Gastrocnemius medialis (tissue), 4 donors: ENCODE measurements at regions of chr6 and their contacts with region 1.

Region 1: GRCh38 chr6:52233975-52234823 is 10.1 kb downstream of the IL17F start:
- DNase-seq: peak in 1 of 2 donors; percentile 24
- ATAC-seq: peak; percentile 56 to 88
- H3K4me3 ChIP-seq: no peak overlapping the region
- H3K27ac ChIP-seq: no peak overlapping the region
- H3K4me1 ChIP-seq: no peaks in the 10 kb centered on the region
- H3K27me3 ChIP-seq: no peaks in the 10 kb centered on the region
- CTCF ChIP-seq: peak; percentile 37 to 71 (median 67)
- POLR2A ChIP-seq: no peak

Region 2: GRCh38 chr6:52063584-52064344 is 170.4 kb before region 1 on chr6:
- in situ Hi-C with region 1: no loop called
- intact Hi-C with region 1: loop called (anchors 1 kb)
- DNase-seq: peak in 1 of 2 donors; percentile 25
- ATAC-seq: peak; percentile 74 to 84
- H3K4me3 ChIP-seq: peak overlapping the region in 2 of 4 donors; percentile 21 to 34
- H3K27ac ChIP-seq: no peak overlapping the region
- H3K4me1 ChIP-seq: peaks cover 0 to 3% of the 10 kb centered on the region in 2 donors
- H3K27me3 ChIP-seq: no peaks in the 10 kb centered on the region
- CTCF ChIP-seq: peak in 4 of 5 experiments; percentile 37 to 72 (median 44)
- POLR2A ChIP-seq: no peak

Region 3: DNA sequence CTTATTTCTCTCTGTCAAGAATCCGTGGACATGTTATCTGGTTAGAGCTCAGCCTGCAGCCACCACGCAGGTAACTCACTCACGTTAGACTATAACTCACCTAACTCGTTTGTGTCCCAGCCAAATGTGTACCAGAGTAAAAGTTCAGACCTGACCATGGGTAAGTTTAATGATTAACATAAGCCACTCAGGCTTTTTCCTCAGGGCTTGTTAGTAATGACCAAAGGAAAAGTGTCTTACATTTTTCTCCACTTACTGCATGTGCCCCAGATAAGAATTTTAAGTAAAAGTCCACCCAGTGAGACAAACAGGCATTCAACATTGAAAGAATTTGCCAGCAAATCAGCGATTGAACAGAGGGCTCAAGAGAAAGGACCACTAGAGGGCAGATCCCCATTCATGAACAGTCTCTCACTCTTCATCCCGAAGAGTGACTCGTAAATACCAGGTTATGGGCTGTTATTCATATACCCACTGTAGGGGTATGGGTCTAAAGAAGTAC is 146.7 kb before region 1 on chr6 and contains the start of gene PKHD1:
- in situ Hi-C with region 1: loop called in 3 of 4 experiments (anchors 10 kb)
- intact Hi-C with region 1: loop called (anchors 1 kb)
- DNase-seq: no peak
- ATAC-seq: peak in 1 of 2 donors; percentile 74
- H3K4me3 ChIP-seq: no peak within 1 kb of the TSS
- H3K27ac ChIP-seq: no peak within 1 kb of the TSS
- H3K4me1 ChIP-seq: no peaks in the 10 kb centered on the region
- H3K27me3 ChIP-seq: no peaks in the 10 kb centered on the region
- CTCF ChIP-seq: peak in 4 of 5 experiments; percentile 34 to 49 (median 42)
- POLR2A ChIP-seq: no peak
- total RNA-seq, gene PKHD1: 0.02 to 0.05 (median 0.02) TPM in 3 of 4 donors, not detected in the other

Region 4: GRCh38 chr6:52108128-52108527 is 126.1 kb before region 1 on chr6:
- in situ Hi-C with region 1: no loop called
- intact Hi-C with region 1: loop called (anchors 5 kb)
- DNase-seq: peak; percentile 83 to 87
- ATAC-seq: peak; percentile 75 to 77
- H3K4me3 ChIP-seq: no peak overlapping the region
- H3K27ac ChIP-seq: peak overlapping the region; percentile 82 to 96 (median 84)
- H3K4me1 ChIP-seq: peaks cover 26 to 51% of the 10 kb centered on the region in 2 donors
- H3K27me3 ChIP-seq: no peaks in the 10 kb centered on the region
- CTCF ChIP-seq: no peak
- POLR2A ChIP-seq: no peak

Region 5: DNA sequence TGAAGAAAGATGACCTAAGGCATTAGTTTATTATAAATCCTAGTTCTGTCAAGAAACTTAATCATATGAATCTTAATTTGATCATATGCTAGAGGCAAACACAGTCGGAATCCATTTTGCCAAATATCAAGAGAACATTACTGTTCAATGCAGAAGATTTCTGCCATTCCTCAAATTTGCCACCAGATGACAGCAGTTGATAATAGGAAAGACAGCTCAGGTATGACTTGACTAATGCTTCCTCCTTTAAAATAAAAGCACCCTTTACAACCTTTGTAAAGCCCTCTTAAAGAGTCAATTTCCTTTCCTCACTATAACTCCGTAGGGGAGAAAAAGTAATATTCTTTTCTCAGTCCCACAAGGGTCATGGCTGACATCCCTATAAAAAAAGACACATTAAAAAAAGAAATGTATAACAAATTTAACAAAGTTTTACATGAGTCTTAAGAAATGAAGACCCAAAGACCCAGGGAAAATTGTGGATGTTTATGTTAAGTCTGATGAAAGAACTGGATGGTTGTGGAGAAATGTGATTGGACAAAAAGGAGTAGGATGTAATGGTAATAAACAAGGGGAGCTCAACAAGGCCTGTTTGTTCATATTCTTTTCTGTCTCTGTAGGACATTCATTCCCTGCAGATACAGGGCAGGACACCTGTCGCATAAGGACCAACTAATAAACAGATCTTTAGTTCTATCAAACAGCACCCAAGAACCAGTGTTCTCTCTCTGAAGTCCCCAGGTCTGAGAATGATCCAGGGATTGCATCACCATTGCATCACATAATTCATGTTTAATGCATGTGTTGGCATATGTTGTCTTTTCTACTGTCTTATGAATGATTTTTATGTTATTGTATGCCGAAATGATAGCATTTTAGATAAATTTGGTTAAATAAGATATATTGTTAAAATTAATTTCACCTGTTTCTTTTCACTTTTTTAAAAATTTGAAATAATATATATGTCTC is 71.0 kb before region 1 on chr6:
- in situ Hi-C with region 1: no loop called
- intact Hi-C with region 1: loop called (anchors 10 kb)
- DNase-seq: no peak
- ATAC-seq: peak in 1 of 2 donors; percentile 26
- H3K4me3 ChIP-seq: no peak overlapping the region
- H3K27ac ChIP-seq: no peak overlapping the region
- H3K4me1 ChIP-seq: no peaks in the 10 kb centered on the region
- H3K27me3 ChIP-seq: no peaks in the 10 kb centered on the region
- CTCF ChIP-seq: peak in 3 of 5 experiments; percentile 49 to 62 (median 52)
- POLR2A ChIP-seq: no peak